ENCODE measurements at regions of chr9 and their contacts with region 1.

Region 1: DNA sequence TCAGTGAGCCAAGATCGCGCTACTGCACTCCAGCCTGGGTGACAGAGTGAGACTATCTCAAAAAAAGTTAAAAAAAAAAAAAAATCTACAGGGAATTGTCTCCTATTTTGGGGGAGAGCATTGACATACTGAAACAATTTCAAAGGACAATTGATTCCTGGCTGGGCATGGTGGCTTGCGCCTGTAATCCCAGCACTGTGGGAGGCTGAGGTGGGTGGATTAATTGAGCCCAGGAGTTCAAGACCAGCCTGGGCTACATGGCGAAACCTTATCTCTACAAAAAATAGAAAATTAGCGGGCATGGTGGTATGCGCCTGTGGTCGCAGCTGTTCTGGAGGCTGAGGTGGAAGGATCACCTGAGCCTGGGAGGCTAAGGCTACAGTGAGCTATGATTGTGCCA is 30.6 kb downstream of the GPR107 start:
- DNase-seq: no peak
- H3K4me3 ChIP-seq: no peak overlapping the region
- H3K27ac ChIP-seq: no peak overlapping the region
- H3K4me1 ChIP-seq: no peaks in the 10 kb centered on the region
- H3K27me3 ChIP-seq: no peaks in the 10 kb centered on the region
- CTCF ChIP-seq: no peak
- EP300 ChIP-seq: no peak
- POLR2A ChIP-seq: no peak
- RAD21 ChIP-seq: no peak

Region 2: GRCh38 chr9:129954868-129955550 is 129.3 kb before region 1 on chr9:
- CTCF ChIA-PET with region 1: no interaction called
- POLR2A ChIA-PET with region 1: no interaction called
- DNase-seq: no peak
- H3K4me3 ChIP-seq: no peak overlapping the region
- H3K27ac ChIP-seq: no peak overlapping the region
- H3K4me1 ChIP-seq: no peaks in the 10 kb centered on the region
- H3K27me3 ChIP-seq: no peaks in the 10 kb centered on the region
- CTCF ChIP-seq: no peak
- EP300 ChIP-seq: no peak
- POLR2A ChIP-seq: no peak
- RAD21 ChIP-seq: no peak

Region 3: DNA sequence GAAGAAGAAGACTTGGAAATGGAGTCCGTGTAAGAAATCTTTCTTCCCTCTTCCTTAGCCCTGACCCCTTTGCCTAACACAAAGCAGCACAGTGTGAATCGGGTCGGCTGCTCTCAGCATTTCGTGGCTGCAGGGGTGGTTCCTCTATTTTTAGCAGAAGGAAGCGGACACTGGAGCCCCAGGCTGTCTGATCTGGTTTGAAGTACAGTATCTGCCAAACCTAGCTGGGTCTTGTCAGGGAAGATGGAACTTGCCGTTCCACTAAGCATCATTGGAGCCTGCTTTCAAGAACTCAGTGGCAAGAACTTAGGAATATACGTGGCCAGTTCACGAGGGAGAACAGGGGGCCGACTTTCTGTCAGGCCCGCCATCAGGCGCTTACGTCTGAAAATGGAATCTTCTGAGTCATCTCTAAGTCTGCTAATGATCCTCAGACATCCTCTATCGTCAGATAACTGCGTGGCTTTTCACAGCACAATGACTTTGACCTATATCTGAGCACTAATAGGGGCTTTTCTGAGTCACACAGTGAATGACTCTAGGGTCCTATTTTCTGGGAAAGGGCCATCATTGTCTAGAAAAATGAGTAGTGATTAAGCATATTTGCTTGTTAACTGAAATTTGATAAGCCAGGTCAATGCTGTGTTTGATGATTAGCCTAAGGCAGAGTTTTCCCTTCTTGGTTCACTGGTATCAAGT is 44.5 kb after region 1 on chr9:
- CTCF ChIA-PET with region 1: no interaction called
- POLR2A ChIA-PET with region 1: no interaction called
- DNase-seq: no peak
- H3K4me3 ChIP-seq: no peak overlapping the region
- H3K27ac ChIP-seq: no peak overlapping the region
- H3K4me1 ChIP-seq: peaks cover 0 to 3% (median 0%) of the 10 kb centered on the region in 4 experiments; a peak in 1 of 7 replicates
- H3K27me3 ChIP-seq: peaks cover 0 to 1% (median 0%) of the 10 kb centered on the region in 4 experiments; a peak in 1 of 7 replicates
- CTCF ChIP-seq: no peak
- EP300 ChIP-seq: no peak
- POLR2A ChIP-seq: no peak
- RAD21 ChIP-seq: no peak

Region 4: DNA sequence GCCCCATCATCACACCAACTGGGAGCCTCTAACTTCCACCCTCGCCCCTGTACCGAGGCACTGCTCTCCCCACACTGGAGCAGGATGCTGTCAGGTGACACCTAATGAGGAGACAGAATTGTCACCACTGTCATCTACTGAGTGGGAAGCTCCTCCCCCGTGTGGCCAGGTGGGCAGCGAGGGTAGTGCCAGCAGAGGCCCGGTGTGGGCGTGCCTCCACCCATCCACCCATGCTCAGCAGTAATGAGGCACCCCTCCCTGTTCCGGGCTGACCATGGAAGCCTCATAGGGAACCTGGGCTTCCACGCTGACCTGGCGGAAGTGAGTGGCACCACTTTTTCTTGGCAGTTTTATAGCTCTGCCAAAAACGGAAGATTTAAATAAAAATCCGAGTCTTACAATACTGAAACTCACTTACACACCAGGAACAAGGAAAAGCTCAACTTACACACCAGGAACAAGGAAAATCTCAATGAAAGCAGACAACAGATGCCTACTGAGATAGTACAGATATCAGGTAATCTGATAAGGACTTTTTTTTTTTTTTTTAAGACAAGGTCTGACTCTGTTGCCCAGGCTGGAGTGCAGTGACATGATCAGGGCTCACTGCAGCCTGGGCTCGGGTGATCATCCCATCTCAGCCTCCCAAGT is 329.9 kb after region 1 on chr9:
- CTCF ChIA-PET with region 1: interaction called, 10 read pairs
- POLR2A ChIA-PET with region 1: no interaction called
- DNase-seq: no peak
- H3K4me3 ChIP-seq: no peak overlapping the region
- H3K27ac ChIP-seq: no peak overlapping the region
- H3K4me1 ChIP-seq: no peaks in the 10 kb centered on the region
- H3K27me3 ChIP-seq: no peaks in the 10 kb centered on the region; a peak in 1 of 7 replicates
- CTCF ChIP-seq: no peak
- EP300 ChIP-seq: no peak
- POLR2A ChIP-seq: no peak
- RAD21 ChIP-seq: no peak

Measured in H1 (cell line).